ENCODE measurements at regions of chr5 and their contacts with region 1.

Region 1: DNA sequence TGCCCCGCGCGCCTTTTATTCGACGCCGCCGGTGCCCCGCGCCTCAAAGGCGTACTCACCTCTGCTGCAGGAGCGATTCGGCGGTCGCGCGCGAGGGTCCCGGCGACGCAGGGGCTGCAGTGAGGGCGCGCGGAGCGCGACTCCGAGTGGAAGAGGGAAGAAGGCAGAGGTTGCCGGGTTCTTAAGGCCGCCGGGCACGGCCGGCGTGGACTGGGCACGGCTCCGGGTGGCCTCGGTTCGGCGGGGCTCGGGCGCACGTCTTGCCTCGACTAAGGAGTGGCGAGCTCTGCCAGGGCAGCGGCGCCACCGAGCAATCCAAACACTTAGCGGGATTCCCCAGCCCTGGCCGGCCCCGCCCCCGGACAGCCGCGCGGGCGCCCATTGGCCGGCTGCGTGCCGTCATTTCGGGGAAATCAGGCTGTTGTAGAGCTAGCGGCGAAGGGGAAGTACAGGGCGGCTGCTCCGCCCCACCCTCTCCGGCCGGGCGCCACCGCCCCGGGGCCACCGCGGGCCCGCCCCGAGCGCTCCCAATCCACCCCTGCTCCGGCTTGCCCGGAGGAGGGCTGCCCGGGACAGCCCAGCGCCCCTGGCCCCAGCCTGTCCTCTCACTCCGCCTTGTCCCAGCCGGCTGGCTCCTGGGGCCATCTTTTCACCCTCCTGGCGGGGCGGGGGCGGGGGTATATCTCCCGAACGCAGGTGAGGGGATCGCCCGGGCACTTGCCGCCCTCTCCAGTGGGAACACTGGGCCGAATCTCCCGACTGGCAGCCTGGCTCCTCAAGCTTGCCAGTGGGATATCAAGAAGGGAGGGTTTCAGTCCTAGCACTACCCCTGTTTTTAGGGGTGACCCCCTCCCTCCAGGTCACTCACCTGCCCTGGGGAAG is at the start of gene IRF1:
- DNase-seq: peak; percentile 98
- ATAC-seq: peak; percentile 70
- H3K4me3 Mint-ChIP-seq: peak within 1 kb of the TSS; percentile 92
- H3K27ac Mint-ChIP-seq: peak within 1 kb of the TSS; percentile 97
- H3K4me1 Mint-ChIP-seq: peaks cover 68% of the 10 kb centered on the region
- H3K27me3 Mint-ChIP-seq: no peaks in the 10 kb centered on the region
- total RNA-seq, gene IRF1: 221 to 228 TPM

Region 2: DNA sequence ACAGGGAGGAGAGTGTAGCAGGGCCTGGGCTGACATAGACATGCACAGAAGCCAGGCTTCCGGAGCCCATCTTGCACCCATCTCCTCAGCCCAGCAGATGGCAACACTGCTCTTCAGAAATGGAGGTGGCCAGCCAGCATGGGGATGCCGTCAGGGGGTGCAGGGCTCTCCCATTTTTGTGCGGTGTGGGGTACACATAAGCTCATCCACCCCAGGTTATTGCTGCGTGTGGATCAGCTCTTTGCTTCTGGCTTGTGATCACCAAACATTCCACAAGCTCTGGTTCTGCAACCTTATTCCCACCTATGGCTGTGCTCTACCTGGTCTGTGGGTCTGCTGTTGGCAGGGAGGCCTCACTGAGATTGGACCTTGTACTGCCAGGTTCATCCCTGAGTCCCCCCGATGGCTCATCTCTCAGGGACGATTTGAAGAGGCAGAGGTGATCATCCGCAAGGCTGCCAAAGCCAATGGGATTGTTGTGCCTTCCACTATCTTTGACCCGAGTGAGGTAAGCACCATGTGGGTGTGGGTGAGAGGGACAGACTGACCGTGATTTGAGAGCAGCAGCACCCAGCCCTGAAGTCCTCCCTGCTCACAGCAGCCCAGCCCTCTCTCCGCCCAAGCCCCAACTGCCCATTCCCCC is 104.0 kb before region 1 on chr5:
- CTCF ChIA-PET with region 1: interaction called, 400 read pairs
- POLR2A ChIA-PET with region 1: interaction called, 53 read pairs
- DNase-seq: peak; percentile 87
- ATAC-seq: peak; percentile 93
- H3K4me3 Mint-ChIP-seq: no peak overlapping the region
- H3K27ac Mint-ChIP-seq: peak overlapping the region; percentile 51
- H3K4me1 Mint-ChIP-seq: peaks cover 57% of the 10 kb centered on the region
- H3K27me3 Mint-ChIP-seq: no peaks in the 10 kb centered on the region

Region 3: DNA sequence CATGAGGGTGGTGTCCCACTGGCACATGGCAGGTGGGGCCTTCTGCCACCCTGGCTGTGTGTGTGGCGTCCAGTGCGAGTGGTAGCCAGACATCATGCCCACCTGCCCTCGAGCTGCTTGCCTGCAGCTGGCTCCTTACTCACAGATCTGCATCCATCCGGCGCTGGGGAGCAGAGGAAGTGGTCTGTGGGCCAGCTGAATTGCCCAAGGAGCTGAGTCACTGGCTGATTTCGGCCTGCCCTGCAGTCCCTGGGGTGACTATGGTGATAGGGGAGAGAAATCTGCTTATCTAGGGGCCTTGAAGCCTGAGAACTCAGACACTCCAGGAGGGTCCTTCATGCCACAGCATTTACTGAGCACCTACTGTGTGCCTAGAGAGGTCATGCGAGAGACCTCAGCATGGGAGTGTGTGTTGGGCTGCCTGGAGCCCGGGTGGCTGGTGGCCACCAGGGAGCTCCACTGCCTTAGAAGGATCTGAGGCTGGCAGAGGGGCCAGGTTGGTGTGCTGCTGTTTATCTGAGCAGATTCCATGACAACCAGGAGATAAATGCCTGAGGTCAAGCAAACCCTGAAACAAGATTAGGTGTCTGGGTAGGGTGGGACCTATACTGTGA is 64.1 kb before region 1 on chr5:
- CTCF ChIA-PET with region 1: interaction called, 52 read pairs
- POLR2A ChIA-PET with region 1: interaction called, 435 read pairs
- DNase-seq: peak; percentile 85
- ATAC-seq: peak; percentile 59
- H3K4me3 Mint-ChIP-seq: peak overlapping the region; percentile 74
- H3K27ac Mint-ChIP-seq: peak overlapping the region; percentile 98
- H3K4me1 Mint-ChIP-seq: peaks cover 99% of the 10 kb centered on the region
- H3K27me3 Mint-ChIP-seq: no peaks in the 10 kb centered on the region

Region 4: DNA sequence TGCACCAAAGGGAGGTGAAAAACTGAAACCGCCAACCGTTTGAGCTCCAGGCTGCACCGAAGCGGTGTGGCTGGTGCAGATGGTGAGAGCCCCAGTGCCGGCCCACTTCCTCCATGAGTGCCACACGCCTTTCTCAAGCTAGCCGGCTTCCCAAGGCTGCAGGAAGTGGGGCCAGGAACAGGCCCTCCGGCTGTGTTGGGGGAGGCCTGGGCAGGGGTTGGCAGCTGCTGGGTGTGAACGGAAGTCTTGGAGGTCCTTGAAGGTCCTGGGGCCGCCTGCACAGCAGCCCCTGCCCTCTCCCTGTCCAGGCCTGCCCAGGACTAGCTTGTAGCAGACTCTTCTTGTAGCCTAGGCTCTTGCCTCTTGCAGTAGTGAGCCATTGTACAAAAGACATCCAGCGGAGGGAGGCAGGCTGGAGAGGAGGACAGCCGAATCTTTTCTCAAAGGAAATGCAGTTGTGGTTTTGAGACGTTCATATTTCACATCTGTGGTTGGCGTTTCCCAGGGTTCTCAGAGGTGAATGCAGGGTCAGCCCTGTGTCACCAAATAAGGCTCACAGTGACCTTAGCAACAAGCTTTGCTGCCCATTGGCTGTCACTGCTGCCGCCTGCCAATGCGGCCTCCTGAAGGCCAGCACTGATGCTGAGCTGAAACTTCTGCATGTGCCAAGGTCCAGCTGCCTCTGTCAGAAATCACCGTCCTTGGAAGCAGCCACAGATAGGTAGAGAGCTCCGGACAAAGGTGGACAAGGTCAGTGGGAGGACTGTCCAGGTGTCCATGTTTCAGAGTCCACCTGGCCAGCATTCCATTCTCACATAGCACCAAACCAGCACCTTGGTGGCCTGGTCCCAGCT is 24.1 kb before region 1 on chr5:
- CTCF ChIA-PET with region 1: interaction called, 36 read pairs
- POLR2A ChIA-PET with region 1: interaction called, 720 read pairs
- DNase-seq: peak; percentile 90
- ATAC-seq: peak; percentile 82
- H3K4me3 Mint-ChIP-seq: peak overlapping the region; percentile 60
- H3K27ac Mint-ChIP-seq: peak overlapping the region; percentile 92
- H3K4me1 Mint-ChIP-seq: peaks cover 100% of the 10 kb centered on the region
- H3K27me3 Mint-ChIP-seq: no peaks in the 10 kb centered on the region

Region 5: DNA sequence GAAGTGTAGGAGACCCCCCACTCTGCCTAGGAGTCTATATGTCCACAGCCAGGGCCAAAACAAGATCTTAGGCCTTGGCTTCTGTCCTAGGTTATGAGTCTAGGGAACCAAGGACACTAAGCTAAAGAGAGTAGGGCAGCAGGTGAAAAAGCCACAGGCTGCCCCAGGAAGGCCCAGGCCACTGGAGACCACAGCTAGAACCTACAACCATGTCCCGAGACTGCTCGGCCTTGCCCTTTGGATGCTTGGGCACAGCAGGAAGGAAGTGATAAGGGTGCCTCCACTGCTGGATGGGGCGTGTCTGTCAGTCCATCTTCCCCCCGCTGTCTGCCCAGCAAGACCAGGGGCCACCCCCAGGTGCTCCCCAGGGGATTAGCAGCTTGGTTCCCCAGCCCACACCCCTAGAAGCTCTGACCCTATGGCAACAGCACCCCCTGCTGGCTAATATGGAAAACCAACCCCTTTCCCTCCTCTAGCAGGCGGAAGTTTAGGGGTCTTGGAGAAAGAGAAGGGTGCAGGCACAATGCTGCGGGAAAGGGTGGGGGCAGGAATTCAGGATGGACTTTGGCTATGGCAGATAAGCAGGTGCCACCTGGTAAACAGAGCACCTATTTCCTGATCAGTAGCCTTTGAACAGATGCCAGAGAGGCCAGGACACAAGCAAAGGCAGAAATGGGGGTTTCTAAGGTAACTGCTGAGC is 10.4 kb after region 1 on chr5:
- CTCF ChIA-PET with region 1: interaction called, 24 read pairs
- POLR2A ChIA-PET with region 1: interaction called, 720 read pairs
- DNase-seq: peak; percentile 85
- ATAC-seq: peak; percentile 25
- H3K4me3 Mint-ChIP-seq: no peak overlapping the region
- H3K27ac Mint-ChIP-seq: peak overlapping the region; percentile 81
- H3K4me1 Mint-ChIP-seq: peaks cover 45% of the 10 kb centered on the region
- H3K27me3 Mint-ChIP-seq: peaks cover 5% of the 10 kb centered on the region

Region 6: GRCh38 chr5:132591145-132591544 is 100.4 kb after region 1 on chr5:
- CTCF ChIA-PET with region 1: no interaction called
- POLR2A ChIA-PET with region 1: no interaction called
- DNase-seq: no peak
- ATAC-seq: no peak
- H3K4me3 Mint-ChIP-seq: no peak overlapping the region
- H3K27ac Mint-ChIP-seq: no peak overlapping the region
- H3K4me1 Mint-ChIP-seq: no peaks in the 10 kb centered on the region
- H3K27me3 Mint-ChIP-seq: no peaks in the 10 kb centered on the region

Measured in activated CD8-positive, alpha-beta T cell treated with anti-CD3 and anti-CD28 coated beads, Interleukin-2, amount 10 ng/mL, durations not matched to agents 7 days and 5 days (primary cell).